Right cardiac atrium (tissue), 5 donors: ENCODE measurements at regions of chr15 and their contacts with region 1.

Region 1: DNA sequence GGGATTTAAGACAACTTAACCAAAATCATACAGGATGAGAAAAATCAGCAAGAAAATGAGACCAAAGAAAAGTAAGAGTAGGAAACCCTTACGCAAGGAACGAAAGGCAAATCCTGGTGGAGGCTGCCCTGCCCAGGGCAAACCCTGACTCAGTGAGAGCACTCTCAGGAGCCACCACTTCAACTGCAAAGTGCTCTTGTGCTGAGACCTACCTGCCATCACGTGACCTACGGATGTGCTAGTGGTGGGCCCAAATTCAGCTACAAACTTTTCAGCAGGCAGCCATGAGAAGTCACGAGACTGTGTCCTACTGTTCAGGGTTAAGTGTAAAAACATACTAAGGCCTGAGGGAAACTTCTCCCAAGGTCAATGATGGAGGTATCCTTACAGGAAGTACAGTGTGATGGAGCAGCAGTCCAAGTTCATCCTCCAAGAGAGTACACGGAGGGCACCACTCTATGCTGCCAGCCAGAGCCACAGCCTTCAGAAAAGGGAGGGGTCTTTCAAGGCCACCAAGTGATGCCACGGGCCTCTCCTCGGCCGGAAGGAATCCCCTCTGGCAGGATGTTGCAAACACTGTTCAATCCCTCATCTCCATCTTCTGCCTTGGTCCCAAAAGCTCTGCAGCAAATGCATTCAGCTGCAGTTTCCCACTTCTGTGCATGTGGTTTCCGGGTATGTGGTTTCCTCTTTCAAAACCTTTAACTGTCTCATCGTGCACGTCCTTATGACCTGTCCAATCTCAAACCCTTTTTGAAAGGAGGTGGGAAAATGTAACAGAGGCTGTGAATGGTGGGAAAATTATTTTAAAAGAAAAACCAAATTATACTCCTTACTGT is 9.5 kb downstream of the CHSY1 start:
- DNase-seq: no peak
- ATAC-seq: peak; percentile 10 to 15
- H3K4me3 ChIP-seq: no peak overlapping the region
- H3K27ac ChIP-seq: peak overlapping the region; percentile 67
- H3K4me1 ChIP-seq: peaks cover 20% of the 10 kb centered on the region
- H3K27me3 ChIP-seq: no peaks in the 10 kb centered on the region

Region 2: GRCh38 chr15:101188637-101189408 is 53.6 kb before region 1 on chr15:
- intact Hi-C with region 1: loop called in 3 of 4 experiments (anchors 10 kb)
- DNase-seq: peak; percentile 54 to 87 (median 78)
- ATAC-seq: peak; percentile 22 to 60
- H3K4me3 ChIP-seq: peak overlapping the region; percentile 65
- H3K27ac ChIP-seq: peak overlapping the region; percentile 89
- H3K4me1 ChIP-seq: peaks cover 19% of the 10 kb centered on the region
- H3K27me3 ChIP-seq: no peaks in the 10 kb centered on the region

Region 3: GRCh38 chr15:101201406-101202174 is 40.8 kb before region 1 on chr15:
- intact Hi-C with region 1: loop called in 3 of 4 experiments (anchors 5 to 10 kb)
- DNase-seq: peak; percentile 95 to 96 (median 96)
- ATAC-seq: peak; percentile 95 to 98
- H3K4me3 ChIP-seq: no peak overlapping the region
- H3K27ac ChIP-seq: peak overlapping the region; percentile 65
- H3K4me1 ChIP-seq: peaks cover 21% of the 10 kb centered on the region
- H3K27me3 ChIP-seq: no peaks in the 10 kb centered on the region